WTC11 (cell line): ENCODE measurements at regions of chr13 and their contacts with region 1.

Region 1: DNA sequence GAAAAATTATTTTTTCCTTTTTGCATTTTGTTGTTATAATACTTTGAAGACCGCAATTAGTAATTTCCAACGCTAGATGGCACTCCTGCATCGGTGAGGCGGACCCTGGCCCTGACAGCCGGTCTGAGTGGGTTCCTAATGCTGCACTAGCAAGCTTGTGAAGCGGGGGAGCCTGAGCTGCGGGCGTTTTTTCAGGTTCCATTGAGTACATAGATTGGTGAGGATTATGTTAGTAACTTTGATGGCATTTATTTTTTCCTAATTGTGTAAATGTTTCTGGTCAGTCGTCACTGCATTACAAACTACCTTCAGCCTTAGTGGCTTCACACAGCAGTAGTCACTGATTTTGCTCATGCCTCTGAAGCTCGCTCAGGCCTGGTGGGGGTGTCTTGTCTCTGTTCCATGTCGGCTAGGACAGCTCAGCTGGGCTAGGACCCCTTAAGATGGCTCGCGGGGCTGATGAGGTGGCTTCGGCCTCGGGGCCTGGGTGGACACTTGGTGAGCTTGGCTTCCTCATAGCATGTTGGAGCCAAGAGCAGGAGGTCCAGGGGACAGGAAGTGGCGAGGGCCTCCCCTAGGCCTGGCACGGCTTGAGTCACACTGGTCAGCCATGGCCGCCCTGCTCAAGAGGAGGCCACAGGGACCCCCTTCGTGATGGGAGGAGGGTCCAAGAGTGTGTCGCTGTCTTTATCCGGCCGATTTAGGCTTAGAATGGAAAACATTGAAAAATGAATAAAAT is 25.0 kb downstream of the ERCC5 start:
- DNase-seq: peak; percentile 62
- ATAC-seq: peak; percentile 93
- H3K4me3 Mint-ChIP-seq: no peak overlapping the region
- H3K27ac Mint-ChIP-seq: no peak overlapping the region
- H3K4me1 Mint-ChIP-seq: peaks cover 10% of the 10 kb centered on the region
- H3K27me3 Mint-ChIP-seq: no peaks in the 10 kb centered on the region
- CTCF ChIP-seq: peak; percentile 67

Region 2: DNA sequence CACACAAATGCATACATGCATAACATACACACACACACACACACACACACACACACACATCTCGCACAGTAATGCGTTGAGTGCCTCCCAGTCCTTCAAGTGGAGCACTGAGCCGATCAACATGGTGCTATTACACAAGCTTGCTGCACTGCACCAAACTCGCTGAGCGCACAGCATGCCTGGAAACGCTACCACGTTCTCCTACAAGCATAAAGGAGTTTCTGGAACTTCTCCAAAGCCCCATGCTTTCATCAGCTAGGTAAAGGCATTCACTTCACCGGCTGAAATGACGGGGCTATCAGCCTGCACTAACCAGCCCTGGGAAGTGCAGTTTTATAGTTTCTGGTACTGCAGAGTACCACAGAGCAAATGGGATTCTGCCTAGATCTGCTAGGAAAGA is 561.7 kb before region 1 on chr13:
- CTCF ChIA-PET with region 1: no interaction called
- POLR2A ChIA-PET with region 1: no interaction called
- DNase-seq: no peak
- ATAC-seq: no peak
- H3K4me3 Mint-ChIP-seq: no peak overlapping the region
- H3K27ac Mint-ChIP-seq: no peak overlapping the region
- H3K4me1 Mint-ChIP-seq: no peaks in the 10 kb centered on the region
- H3K27me3 Mint-ChIP-seq: no peaks in the 10 kb centered on the region
- CTCF ChIP-seq: no peak

Region 3: GRCh38 chr13:102845630-102846260 is 25.1 kb before region 1 on chr13 and contains the start of gene ERCC5:
- CTCF ChIA-PET with region 1: interaction called, 15 read pairs
- POLR2A ChIA-PET with region 1: no interaction called
- DNase-seq: peak; percentile 90
- ATAC-seq: peak; percentile 82
- H3K4me3 Mint-ChIP-seq: peak within 1 kb of the TSS; percentile 95
- H3K27ac Mint-ChIP-seq: peak within 1 kb of the TSS; percentile 95
- H3K4me1 Mint-ChIP-seq: peaks cover 12% of the 10 kb centered on the region
- H3K27me3 Mint-ChIP-seq: no peaks in the 10 kb centered on the region
- CTCF ChIP-seq: no peak
- total RNA-seq, gene ERCC5: 15.6 to 26.5 TPM (median 20.3 TPM) in 3 replicates

Region 4: DNA sequence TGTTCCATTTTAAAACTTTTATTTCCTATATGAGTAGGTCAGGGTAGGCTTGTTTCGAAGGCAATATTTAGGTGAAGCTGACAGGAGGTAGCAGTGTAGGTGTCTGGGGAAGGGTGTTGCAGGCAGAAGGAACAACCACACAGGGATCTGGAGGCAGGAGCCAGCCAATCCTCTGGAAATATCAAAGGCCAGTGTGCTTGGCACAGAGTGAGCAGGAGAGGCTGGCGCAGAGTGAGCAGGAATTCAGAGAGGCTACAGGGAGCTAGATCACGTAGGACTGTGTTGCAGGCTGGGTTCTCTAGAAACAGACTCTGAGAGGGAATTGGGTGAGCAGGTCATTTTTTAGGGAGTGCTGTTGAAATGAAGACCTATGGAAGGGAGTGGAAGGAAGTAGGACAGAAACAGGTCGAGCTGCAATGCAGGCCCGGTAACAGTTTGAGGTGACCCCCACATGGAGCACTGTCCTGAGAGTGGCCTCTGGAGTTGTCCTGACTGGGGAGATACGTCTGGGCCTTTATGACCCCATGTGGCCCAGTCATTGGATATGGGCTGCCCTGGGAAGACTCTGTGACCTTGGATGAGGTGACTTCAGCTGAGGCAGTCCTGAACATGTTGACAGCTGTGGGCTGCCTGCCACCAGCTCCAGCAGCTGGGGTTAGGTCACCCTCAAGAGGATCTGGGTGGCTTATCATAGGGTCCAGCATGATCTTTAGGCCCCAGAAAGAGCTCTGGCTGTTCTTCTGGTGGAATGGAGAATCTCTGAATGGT is 26.7 kb after region 1 on chr13:
- CTCF ChIA-PET with region 1: interaction called, 33 read pairs
- POLR2A ChIA-PET with region 1: no interaction called
- DNase-seq: no peak
- ATAC-seq: no peak
- H3K4me3 Mint-ChIP-seq: no peak overlapping the region
- H3K27ac Mint-ChIP-seq: no peak overlapping the region
- H3K4me1 Mint-ChIP-seq: peaks cover 2% of the 10 kb centered on the region
- H3K27me3 Mint-ChIP-seq: no peaks in the 10 kb centered on the region
- CTCF ChIP-seq: no peak

Region 5: DNA sequence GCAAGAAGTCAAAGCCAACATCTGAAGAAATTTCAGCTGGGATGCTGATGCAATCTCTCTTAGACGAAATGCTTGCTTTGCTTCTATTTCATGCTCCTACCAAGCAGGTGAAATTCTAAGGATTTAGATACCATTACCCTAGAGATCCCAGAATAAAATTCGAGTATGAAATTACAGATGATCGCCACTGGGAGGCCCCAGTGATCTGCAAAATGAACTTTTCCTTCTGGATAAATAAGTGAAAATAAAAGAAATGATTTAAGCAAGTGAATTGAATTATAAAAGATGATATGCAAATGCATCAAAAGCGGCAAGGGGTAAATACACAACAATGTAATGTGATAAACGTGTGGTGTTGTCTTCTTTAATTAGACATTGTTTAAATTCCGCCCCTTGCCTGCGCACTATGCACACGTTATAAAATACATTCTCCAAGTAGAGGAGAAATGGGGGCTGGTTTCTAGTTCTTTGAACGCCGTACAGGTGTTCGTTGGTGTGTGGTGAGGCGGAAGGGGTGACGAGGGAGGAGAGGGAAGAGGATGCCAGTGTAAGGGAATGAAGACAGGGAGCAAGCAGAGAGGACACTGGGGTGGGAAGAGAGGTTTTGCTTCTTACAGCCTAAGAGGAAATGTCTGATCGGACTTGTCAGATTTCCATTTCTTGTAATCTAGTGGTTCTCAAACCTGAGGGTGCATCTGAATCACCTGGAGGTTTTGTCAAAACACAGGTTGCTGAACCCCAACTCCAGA is 33.0 kb after region 1 on chr13:
- CTCF ChIA-PET with region 1: interaction called, 33 read pairs
- POLR2A ChIA-PET with region 1: no interaction called
- DNase-seq: no peak
- ATAC-seq: peak; percentile 61
- H3K4me3 Mint-ChIP-seq: no peak overlapping the region
- H3K27ac Mint-ChIP-seq: no peak overlapping the region
- H3K4me1 Mint-ChIP-seq: peaks cover 16% of the 10 kb centered on the region
- H3K27me3 Mint-ChIP-seq: peaks cover 3% of the 10 kb centered on the region; the same call in 1 of the 2 replicates
- CTCF ChIP-seq: peak; percentile 33; the same call in 1 of the 2 replicates

Region 6: GRCh38 chr13:102913914-102914313 is 43.1 kb after region 1 on chr13:
- CTCF ChIA-PET with region 1: interaction called, 15 read pairs
- POLR2A ChIA-PET with region 1: no interaction called
- DNase-seq: no peak
- ATAC-seq: no peak
- H3K4me3 Mint-ChIP-seq: no peak overlapping the region
- H3K27ac Mint-ChIP-seq: no peak overlapping the region
- H3K4me1 Mint-ChIP-seq: no peaks in the 10 kb centered on the region
- H3K27me3 Mint-ChIP-seq: no peaks in the 10 kb centered on the region
- CTCF ChIP-seq: no peak

Region 7: GRCh38 chr13:103140001-103140671 is 269.3 kb after region 1 on chr13:
- CTCF ChIA-PET with region 1: interaction called, 22 read pairs
- POLR2A ChIA-PET with region 1: no interaction called
- DNase-seq: peak; percentile 22
- ATAC-seq: peak; percentile 98
- H3K4me3 Mint-ChIP-seq: no peak overlapping the region
- H3K27ac Mint-ChIP-seq: no peak overlapping the region
- H3K4me1 Mint-ChIP-seq: no peaks in the 10 kb centered on the region
- H3K27me3 Mint-ChIP-seq: no peaks in the 10 kb centered on the region; the same call in 1 of the 2 replicates
- CTCF ChIP-seq: peak; percentile 51; the same call in 1 of the 2 replicates